Activated CD8-positive, alpha-beta T cell treated with anti-CD3 and anti-CD28 coated beads for 36 hours (primary cell): ENCODE measurements at regions of chr11 and their contacts with region 1.

Region 1: GRCh38 chr11:7538031-7538430 is 24.2 kb downstream of the PPFIBP2 start:
- DNase-seq: peak; percentile 58
- ATAC-seq: peak; percentile 80
- H3K4me3 Mint-ChIP-seq: no peak overlapping the region
- H3K27ac Mint-ChIP-seq: no peak overlapping the region
- H3K4me1 Mint-ChIP-seq: peaks cover 38% of the 10 kb centered on the region
- H3K27me3 Mint-ChIP-seq: peaks cover 2% of the 10 kb centered on the region
- CTCF ChIP-seq: no peak

Region 2: GRCh38 chr11:7549681-7550080 is 11.7 kb after region 1 on chr11:
- CTCF ChIA-PET with region 1: interaction called, 10 read pairs
- POLR2A ChIA-PET with region 1: no interaction called
- intact Hi-C with region 1: no loop called
- DNase-seq: no peak
- ATAC-seq: no peak
- H3K4me3 Mint-ChIP-seq: no peak overlapping the region
- H3K27ac Mint-ChIP-seq: no peak overlapping the region
- H3K4me1 Mint-ChIP-seq: no peaks in the 10 kb centered on the region
- H3K27me3 Mint-ChIP-seq: no peaks in the 10 kb centered on the region
- CTCF ChIP-seq: no peak